A549 (cell line): ENCODE measurements at regions of chr18 and their contacts with region 1.

Region 1: GRCh38 chr18:57644540-57644939 is 22.9 kb upstream of the NARS1 start:
- DNase-seq: peak in 1 of 2 experiments; percentile 25
- ATAC-seq: peak; percentile 56 to 74; a peak in 4 of 6 replicates
- H3K4me3 ChIP-seq: no peak overlapping the region
- H3K27ac ChIP-seq: peak overlapping the region in 1 of 2 experiments; percentile 60; a peak in 2 of 6 replicates
- H3K4me1 ChIP-seq: peaks cover 4% of the 10 kb centered on the region
- CTCF ChIP-seq: peak; percentile 40; the same call in 2 of the 3 replicates
- EP300 ChIP-seq: no peak
- POLR2A ChIP-seq: no peak
- RAD21 ChIP-seq: peak; percentile 46

Region 2: DNA sequence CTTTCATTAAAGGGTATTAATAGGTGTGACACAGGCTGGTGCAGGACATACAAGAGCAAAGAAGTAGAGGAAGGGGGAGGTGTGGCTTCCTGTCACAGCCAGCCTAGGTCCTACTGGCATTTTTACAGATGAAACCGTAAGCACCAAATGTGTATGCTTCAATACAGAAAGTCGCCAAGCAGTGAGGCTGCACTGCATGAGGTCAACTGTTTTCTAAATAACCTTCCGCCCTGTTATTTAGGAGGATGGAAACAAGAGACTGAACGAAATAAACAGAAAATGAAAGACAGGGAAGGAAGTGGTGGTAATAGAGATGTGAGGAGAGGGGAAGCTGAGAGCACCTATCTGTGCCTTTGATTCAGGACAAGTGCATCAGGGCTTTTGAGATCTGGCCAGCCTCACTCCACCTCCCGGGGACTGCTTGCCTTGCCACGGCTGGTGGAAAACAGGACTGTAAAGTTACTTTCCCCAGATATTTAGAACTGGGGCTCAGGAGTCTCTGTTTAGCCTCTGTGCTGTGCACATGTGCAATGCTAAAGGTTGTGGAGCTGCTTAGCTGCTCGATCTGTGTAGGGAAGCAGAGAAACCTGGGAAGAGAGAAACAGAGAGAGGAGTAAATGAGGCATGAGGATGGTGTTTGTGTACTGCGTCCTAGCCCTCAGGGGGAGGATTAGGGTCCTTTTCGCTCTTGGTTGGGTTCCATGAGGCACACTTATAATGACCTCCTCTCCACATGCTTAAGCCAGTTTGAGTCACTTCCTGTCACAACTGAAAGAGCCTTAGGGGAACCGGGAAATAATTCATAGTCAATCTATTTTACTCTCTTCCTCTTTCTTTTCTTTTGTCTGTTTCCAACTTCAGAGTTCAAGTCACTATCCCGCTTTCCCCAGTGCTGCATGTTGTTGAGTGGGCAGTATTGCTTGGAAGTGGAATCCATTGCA is 559.9 kb before region 1 on chr18:
- CTCF ChIA-PET with region 1: no interaction called
- POLR2A ChIA-PET with region 1: no interaction called
- DNase-seq: no peak
- ATAC-seq: no peak
- H3K4me3 ChIP-seq: no peak overlapping the region
- H3K27ac ChIP-seq: no peak overlapping the region
- H3K4me1 ChIP-seq: no peaks in the 10 kb centered on the region
- CTCF ChIP-seq: no peak
- EP300 ChIP-seq: no peak
- POLR2A ChIP-seq: no peak
- RAD21 ChIP-seq: no peak

Region 3: GRCh38 chr18:57630002-57630753 is 14.4 kb before region 1 on chr18:
- CTCF ChIA-PET with region 1: interaction called, 10 read pairs
- POLR2A ChIA-PET with region 1: no interaction called
- DNase-seq: peak; percentile 79 to 95
- ATAC-seq: peak; percentile 98
- H3K4me3 ChIP-seq: peak overlapping the region; percentile 73
- H3K27ac ChIP-seq: peak overlapping the region; percentile 92 to 94
- H3K4me1 ChIP-seq: peaks cover 12% of the 10 kb centered on the region; the same call in 2 of the 3 replicates
- CTCF ChIP-seq: peak; percentile 52
- EP300 ChIP-seq: no peak
- POLR2A ChIP-seq: peak; percentile 22; the same call in 1 of the 2 replicates
- RAD21 ChIP-seq: peak; percentile 83 to 85